T-cell (primary cell): ENCODE measurements at regions of chr3 and their contacts with region 1.

Region 1: GRCh38 chr3:55711646-55712045 is 224.5 kb upstream of the WNT5A start:
- DNase-seq: no peak
- ATAC-seq: no peak
- H3K4me3 ChIP-seq: no peak overlapping the region
- H3K4me3 Mint-ChIP-seq: no peak overlapping the region
- H3K27ac ChIP-seq: no peak overlapping the region
- H3K27ac Mint-ChIP-seq: no peak overlapping the region
- H3K4me1 ChIP-seq: no peaks in the 10 kb centered on the region
- H3K4me1 Mint-ChIP-seq: no peaks in the 10 kb centered on the region
- H3K27me3 ChIP-seq: no peaks in the 10 kb centered on the region
- H3K27me3 Mint-ChIP-seq: peaks cover 0 to 9% of the 10 kb centered on the region in 2 donors

Region 2: DNA sequence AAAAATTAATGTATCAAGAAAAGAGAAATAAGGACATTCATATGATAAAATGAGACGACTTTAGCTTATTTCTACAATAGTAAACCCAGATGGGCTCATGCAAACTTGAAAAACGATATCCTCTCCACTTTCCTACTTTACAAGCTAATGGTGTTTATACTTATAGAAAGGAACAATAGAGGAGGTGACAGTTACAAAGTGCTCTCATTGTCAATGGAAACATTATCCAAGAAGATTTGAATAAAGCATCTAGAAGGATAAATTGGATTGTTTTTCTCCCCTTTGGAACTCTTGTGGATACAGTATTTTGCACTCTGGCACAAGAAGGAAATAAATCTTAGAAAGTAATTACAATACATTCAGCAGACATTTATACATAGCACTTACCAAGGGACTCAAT is 825.1 kb after region 1 on chr3:
- CTCF ChIA-PET with region 1: no interaction called
- POLR2A ChIA-PET with region 1: interaction called in 1 of 2 experiments, 14 read pairs
- DNase-seq: no peak
- ATAC-seq: no peak
- H3K4me3 ChIP-seq: no peak overlapping the region
- H3K4me3 Mint-ChIP-seq: no peak overlapping the region
- H3K27ac ChIP-seq: no peak overlapping the region
- H3K27ac Mint-ChIP-seq: no peak overlapping the region
- H3K4me1 ChIP-seq: no peaks in the 10 kb centered on the region
- H3K4me1 Mint-ChIP-seq: no peaks in the 10 kb centered on the region
- H3K27me3 ChIP-seq: peaks cover 0 to 4% of the 10 kb centered on the region in 2 experiments
- H3K27me3 Mint-ChIP-seq: peaks cover 0 to 4% of the 10 kb centered on the region in 2 donors